Right ventricle myocardium inferior (tissue), 1 donor: ENCODE measurements at regions of chr11 and their contacts with region 1.

Region 1: DNA sequence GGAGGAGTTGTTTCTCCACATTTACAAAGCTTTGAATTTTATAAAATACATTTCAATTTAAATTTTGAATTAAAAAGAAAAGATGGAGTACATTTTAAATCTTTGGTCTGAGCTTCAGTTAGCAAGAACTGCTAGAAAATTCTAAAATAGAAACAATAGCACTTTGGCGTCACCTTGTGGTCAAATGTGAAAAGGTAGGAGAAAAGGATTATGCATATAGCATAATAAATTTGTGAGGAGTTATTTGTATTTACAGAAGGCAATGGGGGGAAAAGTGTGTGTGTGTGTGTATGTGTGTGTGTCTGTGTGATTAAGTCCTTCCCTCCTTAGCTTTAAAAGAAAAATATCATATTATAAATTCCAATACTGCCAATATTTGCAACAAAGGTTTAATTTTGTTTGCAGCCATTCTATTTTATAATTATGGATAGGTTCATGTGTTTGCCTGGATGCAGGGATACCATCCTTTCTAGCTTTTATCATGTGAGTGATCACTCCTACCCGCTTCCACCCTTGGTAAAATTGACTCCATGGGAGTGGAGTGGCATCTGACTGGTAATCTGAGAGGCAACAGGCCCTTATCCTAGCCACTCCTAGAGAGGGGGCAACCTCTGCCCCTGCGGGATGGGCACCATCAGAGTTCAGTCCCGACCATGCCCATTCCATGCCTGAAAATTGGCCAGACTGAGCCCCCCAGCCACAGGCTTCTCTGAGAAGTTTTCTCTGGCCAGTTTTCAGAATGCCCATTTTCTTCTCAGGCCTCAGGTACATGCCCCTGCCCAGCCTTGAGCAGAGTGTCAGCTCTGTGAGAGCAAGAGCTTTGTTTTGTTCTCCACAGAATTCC is 13.6 kb upstream of the LGR4 start:
- DNase-seq: no peak
- ATAC-seq: peak; percentile 25

Region 2: DNA sequence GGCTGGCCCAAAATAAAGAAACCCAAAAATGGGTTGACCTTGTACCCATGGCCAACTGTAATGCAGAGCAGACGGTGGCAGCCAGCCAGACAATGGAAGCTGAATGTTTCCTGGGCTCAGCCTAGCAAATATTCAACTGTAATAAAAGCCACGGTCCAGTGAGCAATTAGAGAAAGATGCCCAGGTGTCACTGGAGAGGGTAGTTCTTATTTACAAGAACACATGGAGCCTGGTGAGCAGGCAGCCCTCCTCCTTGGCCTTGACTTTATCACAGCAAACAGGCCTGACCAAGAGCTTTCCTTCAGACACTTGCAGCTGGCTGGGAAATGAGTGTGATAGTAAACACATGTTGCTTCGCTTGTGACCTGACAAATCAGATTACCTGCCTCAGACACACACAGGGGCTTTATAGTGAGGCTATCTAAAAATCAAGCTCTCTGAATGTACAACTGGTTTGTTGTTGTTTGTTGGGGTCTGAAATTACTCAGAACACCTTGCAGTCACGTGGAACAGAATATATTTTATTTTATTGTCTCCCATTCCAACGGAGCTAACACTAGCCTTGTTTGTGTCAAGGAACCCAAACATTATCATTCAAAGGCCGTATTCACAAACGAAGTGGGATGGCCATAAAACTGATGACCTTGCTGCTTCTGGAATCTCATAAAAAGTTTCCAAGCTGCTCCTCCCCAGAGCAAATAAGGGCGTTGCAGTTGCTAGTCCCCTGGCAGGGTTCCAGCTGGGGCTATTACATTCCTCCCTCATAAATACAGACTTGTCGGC is 284.5 kb before region 1 on chr11:
- intact Hi-C with region 1: loop called (anchors 5 kb)
- DNase-seq: peak; percentile 73
- ATAC-seq: peak; percentile 74

Region 3: DNA sequence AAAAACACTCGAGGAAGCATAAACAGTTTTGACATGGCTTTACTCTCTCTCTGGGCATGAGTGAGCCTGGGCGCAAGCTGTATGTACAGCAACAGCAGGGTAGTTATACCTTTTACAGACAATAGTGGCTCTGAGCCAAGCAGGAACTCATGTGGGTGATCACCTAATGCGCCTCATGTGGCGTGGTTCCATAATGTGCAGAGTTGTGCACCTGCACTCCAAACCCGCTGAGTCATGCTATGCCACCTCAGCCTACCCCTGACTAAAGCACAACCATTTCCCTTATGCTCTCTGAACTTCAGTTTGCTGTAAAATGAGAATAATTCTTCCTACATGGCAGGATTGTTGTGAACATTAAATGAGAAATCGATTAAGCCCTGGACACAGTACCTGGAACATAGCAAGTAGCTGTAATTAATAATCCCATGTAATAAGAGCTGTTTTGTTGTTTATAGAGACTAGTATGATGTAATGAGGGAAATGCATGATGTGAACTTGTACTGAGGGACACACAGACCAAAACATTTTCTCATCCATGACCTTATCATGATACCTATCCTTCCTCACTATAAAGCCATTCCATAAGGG is 194.8 kb before region 1 on chr11:
- intact Hi-C with region 1: loop called (anchors 5 kb)
- DNase-seq: no peak
- ATAC-seq: no peak

Region 4: DNA sequence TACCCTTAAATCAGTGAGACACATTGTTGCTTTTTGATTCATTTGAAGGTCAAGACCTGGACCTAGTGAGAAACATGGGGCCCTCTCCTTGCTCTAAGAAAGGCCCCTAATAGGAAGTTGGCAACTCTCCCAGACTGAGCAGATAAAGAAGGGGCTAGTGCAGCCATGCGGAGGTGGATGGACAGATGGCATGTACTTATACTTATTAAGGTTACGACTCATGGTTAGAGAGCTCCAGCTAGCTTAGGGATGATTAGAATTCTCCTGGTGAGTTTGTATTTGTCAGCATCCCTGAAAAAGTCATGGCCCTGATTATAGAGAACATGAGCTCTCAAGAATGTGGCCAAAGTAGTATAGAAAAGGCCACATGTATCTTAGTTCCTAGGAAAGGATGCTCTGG is 326.2 kb after region 1 on chr11:
- intact Hi-C with region 1: no loop called
- DNase-seq: no peak
- ATAC-seq: no peak